Caco-2 (cell line): ENCODE measurements at regions of chr7 and their contacts with region 1.

Region 1: DNA sequence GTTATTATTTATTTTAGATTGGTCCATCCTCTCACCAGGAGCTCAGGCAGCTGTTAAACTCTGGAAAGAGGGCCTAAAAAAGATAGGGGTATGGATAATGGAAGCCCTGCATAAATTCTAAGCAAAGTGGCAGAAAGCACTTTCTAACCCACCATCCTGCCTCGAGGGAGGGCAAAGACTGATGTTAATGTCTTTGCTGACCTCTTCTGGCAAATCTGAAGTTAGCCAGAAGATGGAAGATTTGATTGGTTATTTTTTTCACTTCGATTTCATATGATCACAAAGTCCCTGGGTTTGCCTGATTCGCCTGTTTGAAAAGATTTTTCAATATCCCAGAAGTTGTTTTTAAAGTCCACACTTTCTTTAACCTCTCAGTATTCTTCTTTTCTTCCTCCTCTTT is 24.8 kb downstream of the OR9A2 start:
- DNase-seq: peak in 1 of 2 experiments; percentile 38
- H3K4me3 ChIP-seq: no peak overlapping the region
- H3K4me3 Mint-ChIP-seq: no peak overlapping the region
- H3K27ac Mint-ChIP-seq: no peak overlapping the region
- H3K4me1 ChIP-seq: peaks cover 17% of the 10 kb centered on the region
- H3K4me1 Mint-ChIP-seq: peaks cover 14% of the 10 kb centered on the region
- H3K27me3 ChIP-seq: no peaks in the 10 kb centered on the region
- H3K27me3 Mint-ChIP-seq: no peaks in the 10 kb centered on the region
- CTCF ChIP-seq: peak; percentile 40 to 58

Region 2: DNA sequence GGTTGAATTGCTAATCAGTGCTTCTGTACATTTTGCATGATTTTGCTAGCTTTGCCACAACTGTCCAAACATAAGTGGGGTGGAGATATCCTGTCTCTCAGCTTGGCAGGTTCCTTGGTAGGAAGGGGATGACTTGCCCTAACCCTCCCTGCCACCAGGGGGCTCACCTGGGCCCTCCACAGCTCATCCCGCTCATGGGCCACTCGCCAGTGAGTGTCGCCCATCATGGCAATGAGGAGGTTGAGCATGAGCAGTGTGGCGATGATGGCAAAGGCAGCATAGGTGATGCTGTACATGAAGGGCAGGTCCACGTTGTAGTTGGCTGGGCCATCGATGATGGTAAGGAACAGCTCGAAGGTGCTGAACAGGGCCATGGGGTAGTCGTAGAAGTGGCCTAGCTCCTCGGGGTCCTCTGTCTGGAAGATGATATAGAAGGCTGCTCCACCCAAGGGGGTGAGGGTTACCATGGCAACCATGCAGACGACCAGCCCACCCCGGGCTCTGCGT is 128.8 kb before region 1 on chr7:
- CTCF ChIA-PET with region 1: interaction called, 16 read pairs
- POLR2A ChIA-PET with region 1: no interaction called
- intact Hi-C with region 1: loop called (anchors 1 kb)
- DNase-seq: peak; percentile 44 to 60
- H3K4me3 ChIP-seq: no peak overlapping the region
- H3K4me3 Mint-ChIP-seq: no peak overlapping the region
- H3K27ac Mint-ChIP-seq: no peak overlapping the region
- H3K4me1 ChIP-seq: no peaks in the 10 kb centered on the region
- H3K4me1 Mint-ChIP-seq: no peaks in the 10 kb centered on the region
- H3K27me3 ChIP-seq: no peaks in the 10 kb centered on the region
- H3K27me3 Mint-ChIP-seq: no peaks in the 10 kb centered on the region
- CTCF ChIP-seq: peak; percentile 59 to 64

Region 3: DNA sequence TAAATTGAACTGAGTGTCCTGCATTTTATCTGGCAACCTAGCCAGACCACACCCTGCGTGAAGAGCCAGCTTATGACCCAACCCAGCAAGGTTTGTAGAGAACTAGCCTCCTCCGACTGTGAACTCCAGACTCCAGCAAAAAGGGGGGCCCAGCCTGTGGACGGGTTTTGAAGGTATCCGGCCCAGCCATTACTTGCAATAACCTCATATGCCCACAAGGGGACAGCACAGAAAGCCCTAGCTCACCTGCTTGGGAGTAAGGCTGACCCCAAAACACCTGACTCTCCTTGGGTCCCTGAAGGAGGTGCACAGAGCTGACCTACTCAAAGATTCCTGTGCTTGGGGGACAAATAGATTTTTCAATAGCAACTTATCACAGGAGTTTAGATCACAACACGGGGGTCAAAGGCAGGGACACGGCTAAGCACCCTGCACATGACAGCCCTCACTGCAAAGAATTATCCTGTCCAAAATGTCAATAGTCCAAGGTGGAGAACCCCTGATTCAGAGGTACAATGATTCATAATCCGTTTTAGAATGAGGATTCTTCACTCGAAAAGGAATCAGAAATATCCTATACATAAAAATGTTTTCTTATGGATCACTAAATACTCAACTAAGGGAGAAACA is 121.1 kb before region 1 on chr7:
- CTCF ChIA-PET with region 1: interaction called, 7 read pairs
- POLR2A ChIA-PET with region 1: no interaction called
- intact Hi-C with region 1: loop called (anchors 1 kb)
- DNase-seq: peak; percentile 53 to 54
- H3K4me3 ChIP-seq: no peak overlapping the region
- H3K4me3 Mint-ChIP-seq: no peak overlapping the region
- H3K27ac Mint-ChIP-seq: no peak overlapping the region
- H3K4me1 ChIP-seq: peaks cover 20% of the 10 kb centered on the region
- H3K4me1 Mint-ChIP-seq: no peaks in the 10 kb centered on the region
- H3K27me3 ChIP-seq: no peaks in the 10 kb centered on the region
- H3K27me3 Mint-ChIP-seq: no peaks in the 10 kb centered on the region
- CTCF ChIP-seq: peak; percentile 91 to 92

Region 4: DNA sequence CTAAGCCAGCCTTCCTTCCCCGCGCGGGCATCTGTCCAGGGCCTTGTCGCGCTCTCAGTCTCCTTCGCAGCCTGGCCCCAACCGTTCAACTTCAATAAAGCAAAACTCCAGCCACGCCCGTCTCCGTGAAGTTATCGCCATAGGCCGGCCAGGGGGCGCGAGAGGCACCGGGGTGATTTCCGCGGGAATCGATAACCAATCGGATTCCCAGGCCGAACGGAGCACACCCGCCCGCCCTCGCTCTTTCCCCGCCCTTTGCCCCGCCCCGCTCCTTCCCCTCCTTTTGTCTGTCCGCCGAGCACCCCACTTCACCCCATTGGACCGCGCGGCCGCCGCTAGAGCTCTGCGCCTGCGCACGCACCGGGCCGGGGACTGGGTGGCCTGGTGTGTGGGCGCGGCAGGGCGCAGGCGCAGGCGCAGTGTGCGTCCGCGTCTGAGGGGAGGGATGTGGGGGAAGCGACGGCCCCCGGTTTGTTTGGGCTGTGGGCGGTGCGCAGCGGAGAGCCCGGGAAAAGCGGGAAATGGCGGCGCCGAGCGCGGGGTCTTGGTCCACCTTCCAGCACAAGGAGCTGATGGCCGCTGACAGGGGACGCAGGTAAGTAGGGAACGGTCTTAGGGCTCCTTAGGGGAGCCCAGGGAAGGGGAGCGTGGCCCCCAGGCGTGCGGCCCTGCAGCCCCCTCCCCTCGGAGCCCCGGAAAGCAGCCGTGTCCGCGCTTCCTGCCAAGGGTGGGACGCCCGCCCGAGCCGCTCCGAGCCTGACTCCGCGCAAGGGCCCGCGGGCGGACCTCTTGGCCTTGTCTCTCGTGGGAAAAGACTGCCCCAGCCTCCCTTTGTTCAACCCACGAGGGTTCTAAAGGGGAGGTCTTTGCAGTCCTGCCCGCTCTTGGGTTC is 286.1 kb after region 1 on chr7 and contains the start of gene CASP2:
- CTCF ChIA-PET with region 1: interaction called, 10 read pairs
- POLR2A ChIA-PET with region 1: no interaction called
- intact Hi-C with region 1: no loop called
- DNase-seq: peak; percentile 99
- H3K4me3 ChIP-seq: peak within 1 kb of the TSS; percentile 73
- H3K4me3 Mint-ChIP-seq: peak within 1 kb of the TSS; percentile 81
- H3K27ac Mint-ChIP-seq: peak within 1 kb of the TSS; percentile 89
- H3K4me1 ChIP-seq: peaks cover 37% of the 10 kb centered on the region
- H3K4me1 Mint-ChIP-seq: peaks cover 47% of the 10 kb centered on the region
- H3K27me3 ChIP-seq: no peaks in the 10 kb centered on the region
- H3K27me3 Mint-ChIP-seq: no peaks in the 10 kb centered on the region
- CTCF ChIP-seq: peak; percentile 53 to 55
- total RNA-seq, gene CASP2: 51.7 and 62.0 TPM in 2 replicates